H1 (cell line): ENCODE measurements at regions of chr6 and their contacts with region 1.

Region 1: GRCh38 chr6:27078734-27079357 is 168.7 kb upstream of the PRSS16 start:
- DNase-seq: peak; percentile 27 to 83
- H3K4me3 ChIP-seq: peak overlapping the region; percentile 62 to 79 (median 73)
- H3K27ac ChIP-seq: no peak overlapping the region
- H3K4me1 ChIP-seq: no peaks in the 10 kb centered on the region
- H3K27me3 ChIP-seq: no peaks in the 10 kb centered on the region
- CTCF ChIP-seq: peak in 2 of 3 experiments; percentile 66 to 81; a peak in 3 of 4 replicates
- EP300 ChIP-seq: no peak
- POLR2A ChIP-seq: 0 out of 3 replicates have a peak, but pooled peaks of 1 of the 2 experiments have one; percentile 35
- RAD21 ChIP-seq: peak; percentile 76 to 85

Region 2: GRCh38 chr6:26537846-26538571 is 540.8 kb before region 1 on chr6 and contains the start of gene HMGN4:
- CTCF ChIA-PET with region 1: no interaction called
- POLR2A ChIA-PET with region 1: no interaction called
- DNase-seq: peak in 1 of 2 experiments; percentile 87
- H3K4me3 ChIP-seq: peak within 1 kb of the TSS; percentile 73 to 87 (median 80)
- H3K27ac ChIP-seq: peak within 1 kb of the TSS; percentile 84
- H3K4me1 ChIP-seq: peaks cover 0 to 4% (median 3%) of the 10 kb centered on the region in 4 experiments; a peak in 5 of 7 replicates
- H3K27me3 ChIP-seq: no peaks in the 10 kb centered on the region
- CTCF ChIP-seq: no peak
- EP300 ChIP-seq: no peak
- POLR2A ChIP-seq: peak in 1 of 2 experiments; percentile 65; a peak in 1 of 3 replicates
- RAD21 ChIP-seq: no peak
- total RNA-seq, gene HMGN4: 61.9 and 66.4 TPM in 2 replicates

Region 3: DNA sequence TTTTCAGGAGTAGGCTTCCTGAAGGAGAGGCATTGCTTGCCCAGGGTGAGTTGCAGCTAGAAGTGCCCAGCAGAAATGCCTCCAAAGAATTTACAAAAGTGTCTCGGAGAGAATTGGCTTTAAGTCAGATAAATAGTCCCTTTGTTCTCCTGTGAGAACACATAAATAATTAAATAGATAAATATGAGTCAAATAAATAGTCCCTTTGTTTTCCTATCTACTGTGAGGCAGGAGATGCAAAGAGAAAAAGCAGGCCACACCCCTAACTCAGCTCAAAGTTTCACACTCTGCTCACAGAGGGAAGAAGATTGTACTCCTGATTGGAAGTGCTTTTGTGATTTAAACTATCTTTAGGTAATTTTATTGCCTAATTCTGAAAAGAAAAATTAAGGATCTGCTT is 12.0 kb before region 1 on chr6:
- CTCF ChIA-PET with region 1: interaction called, 10 read pairs
- POLR2A ChIA-PET with region 1: interaction called, 3 read pairs
- DNase-seq: no peak
- H3K4me3 ChIP-seq: peak overlapping the region in 2 of 4 experiments; percentile 2 to 7; a peak in 2 of 8 replicates
- H3K27ac ChIP-seq: no peak overlapping the region
- H3K4me1 ChIP-seq: peaks cover 4 to 5% (median 4%) of the 10 kb centered on the region in 4 experiments; a peak in 6 of 7 replicates
- H3K27me3 ChIP-seq: no peaks in the 10 kb centered on the region
- CTCF ChIP-seq: no peak
- EP300 ChIP-seq: no peak
- POLR2A ChIP-seq: no peak
- RAD21 ChIP-seq: no peak

Region 4: DNA sequence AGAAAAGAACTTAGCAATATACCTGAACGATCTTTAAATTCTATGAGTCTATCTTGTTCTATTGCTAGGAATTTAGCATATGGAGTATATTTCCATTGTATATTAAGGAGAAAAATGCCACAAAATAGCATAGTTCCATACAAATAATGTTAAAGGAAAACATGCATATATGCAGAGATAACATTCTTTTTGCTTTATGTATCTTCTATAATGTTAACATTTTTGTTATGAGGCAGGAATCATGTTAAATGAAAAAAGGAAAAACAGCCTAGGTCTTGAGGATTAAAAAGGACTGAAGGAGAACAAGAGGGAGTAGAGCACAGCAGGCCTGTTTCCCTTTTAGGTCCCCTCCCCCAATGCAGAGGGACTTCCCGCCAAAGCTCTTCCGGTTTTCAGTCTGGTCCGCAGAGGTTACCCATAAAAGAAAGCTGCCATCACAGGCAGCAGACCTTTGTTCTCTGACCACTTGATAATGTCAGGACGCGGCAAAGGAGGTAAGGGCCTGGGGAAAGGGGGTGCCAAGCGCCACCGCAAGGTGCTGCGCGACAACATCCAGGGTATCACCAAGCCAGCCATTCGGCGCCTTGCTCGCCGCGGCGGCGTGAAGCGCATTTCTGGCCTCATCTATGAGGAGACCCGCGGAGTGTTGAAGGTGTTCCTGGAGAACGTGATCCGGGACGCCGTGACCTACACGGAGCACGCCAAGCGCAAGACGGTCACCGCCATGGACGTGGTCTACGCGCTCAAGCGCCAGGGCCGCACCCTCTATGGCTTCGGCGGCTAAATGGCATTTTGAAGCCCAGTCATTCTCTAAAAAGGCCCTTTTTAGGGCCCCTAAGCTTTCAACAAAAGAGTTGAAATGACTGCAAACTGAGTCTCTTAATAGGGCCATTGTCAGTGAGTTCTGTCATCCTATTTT is 60.2 kb after region 1 on chr6:
- CTCF ChIA-PET with region 1: no interaction called
- POLR2A ChIA-PET with region 1: no interaction called
- DNase-seq: peak; percentile 91 to 92
- H3K4me3 ChIP-seq: peak overlapping the region; percentile 50 to 95 (median 70)
- H3K27ac ChIP-seq: peak overlapping the region; percentile 95
- H3K4me1 ChIP-seq: peaks cover 0 to 10% (median 4%) of the 10 kb centered on the region in 4 experiments; a peak in 5 of 7 replicates
- H3K27me3 ChIP-seq: no peaks in the 10 kb centered on the region
- CTCF ChIP-seq: no peak
- EP300 ChIP-seq: peak; percentile 40 to 99
- POLR2A ChIP-seq: peak; percentile 91 to 99
- RAD21 ChIP-seq: no peak